ENCODE measurements at regions of chr6 and their contacts with region 1.

Region 1: DNA sequence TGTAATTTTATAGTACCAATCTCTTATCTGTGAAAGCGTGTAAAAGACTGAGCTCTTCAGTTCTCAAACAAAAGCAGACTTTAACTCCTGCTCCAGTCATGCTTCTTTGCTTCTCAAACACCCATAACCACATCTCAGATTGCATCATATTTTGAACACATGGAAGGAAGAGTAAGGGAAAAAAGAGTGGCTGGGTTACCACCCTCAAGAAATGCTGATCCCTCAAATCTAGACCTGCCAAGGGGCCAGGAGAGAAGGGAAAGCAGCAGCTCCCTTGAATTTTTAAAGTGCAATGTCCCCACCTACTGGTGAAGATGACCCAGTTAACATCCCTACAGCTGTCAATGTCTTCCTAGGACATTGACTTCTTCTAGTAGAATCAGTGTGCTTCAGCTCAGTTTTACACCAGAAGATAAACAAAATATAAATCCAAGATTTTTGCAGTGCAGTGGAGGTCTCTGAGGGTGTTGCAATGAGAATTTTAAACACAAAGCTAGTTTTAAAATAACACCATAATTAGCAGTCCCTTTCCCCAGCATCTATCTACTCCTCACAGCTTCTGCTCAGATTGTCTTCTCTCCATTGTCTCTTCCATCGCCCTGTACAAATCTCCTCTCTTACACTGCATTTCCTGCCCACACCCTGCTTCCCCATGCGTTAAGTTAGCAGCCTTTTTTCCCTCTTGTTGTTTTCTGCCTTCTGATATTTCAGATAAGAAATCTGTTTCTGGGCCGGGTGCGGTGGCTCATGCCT is 22.6 kb upstream of the HLA-DQB2 start:
- DNase-seq: peak; percentile 73 to 84 (median 80)
- H3K4me3 ChIP-seq: no peak overlapping the region
- H3K27ac ChIP-seq: no peak overlapping the region
- H3K4me1 ChIP-seq: peaks cover 0 to 4% (median 0%) of the 10 kb centered on the region in 4 experiments
- H3K27me3 ChIP-seq: no peaks in the 10 kb centered on the region

Region 2: GRCh38 chr6:32424589-32425300 is 361.2 kb before region 1 on chr6:
- CTCF ChIA-PET with region 1: interaction called, 12 read pairs
- POLR2A ChIA-PET with region 1: no interaction called
- DNase-seq: no peak
- H3K4me3 ChIP-seq: no peak overlapping the region
- H3K27ac ChIP-seq: no peak overlapping the region
- H3K4me1 ChIP-seq: peaks cover 0 to 1% (median 0%) of the 10 kb centered on the region in 4 experiments
- H3K27me3 ChIP-seq: no peaks in the 10 kb centered on the region

Region 3: DNA sequence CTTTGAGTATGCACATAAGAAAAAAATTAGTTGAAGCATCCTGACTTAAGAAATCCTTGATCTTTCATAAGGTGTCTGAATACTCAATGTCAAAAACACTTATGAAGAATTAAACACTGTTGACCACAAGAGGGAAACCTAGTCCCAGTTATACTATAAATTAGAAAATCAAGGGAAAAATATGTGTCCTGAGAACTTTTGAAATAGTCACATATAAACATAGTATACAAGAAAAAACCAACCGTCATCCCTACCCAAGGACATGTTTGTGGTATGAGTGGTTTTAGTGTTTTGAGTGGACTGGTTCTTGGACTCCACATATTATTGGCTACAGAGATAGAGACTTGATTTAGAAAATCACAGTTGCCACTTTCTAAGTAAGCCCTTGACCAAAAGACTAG is 353.9 kb before region 1 on chr6:
- CTCF ChIA-PET with region 1: interaction called, 32 read pairs
- POLR2A ChIA-PET with region 1: no interaction called
- DNase-seq: peak; percentile 60 to 69 (median 63)
- H3K4me3 ChIP-seq: no peak overlapping the region
- H3K27ac ChIP-seq: no peak overlapping the region
- H3K4me1 ChIP-seq: peaks cover 2 to 8% (median 5%) of the 10 kb centered on the region in 4 experiments
- H3K27me3 ChIP-seq: no peaks in the 10 kb centered on the region

Region 4: GRCh38 chr6:32700391-32701040 is 85.4 kb before region 1 on chr6:
- CTCF ChIA-PET with region 1: interaction called, 21 read pairs
- POLR2A ChIA-PET with region 1: no interaction called
- DNase-seq: peak; percentile 51 to 63 (median 60)
- H3K4me3 ChIP-seq: peak overlapping the region in 3 of 7 experiments; percentile 23 to 53 (median 36)
- H3K27ac ChIP-seq: no peak overlapping the region
- H3K4me1 ChIP-seq: peaks cover 0 to 4% (median 2%) of the 10 kb centered on the region in 4 experiments
- H3K27me3 ChIP-seq: peaks cover 0 to 6% (median 0%) of the 10 kb centered on the region in 5 experiments

Region 5: DNA sequence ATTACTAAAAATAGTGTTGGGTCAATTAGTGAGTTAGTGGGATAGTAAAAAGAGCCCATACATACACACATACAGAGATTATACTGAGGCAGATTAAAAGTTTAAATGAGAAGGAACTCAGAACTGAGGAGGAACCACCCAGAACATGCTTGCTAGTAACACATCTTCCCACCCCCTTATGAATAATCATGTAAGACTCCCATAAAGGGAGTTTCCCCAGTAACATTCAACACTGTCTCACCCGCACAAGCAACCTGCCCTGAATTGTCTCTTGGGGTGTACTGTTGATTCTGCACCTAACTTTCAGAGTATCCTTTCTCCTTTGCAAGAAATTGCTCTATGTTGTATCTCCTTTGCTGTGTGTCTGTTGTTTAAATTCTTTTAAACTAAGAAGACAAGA is 11.5 kb before region 1 on chr6:
- CTCF ChIA-PET with region 1: interaction called, 13 read pairs
- POLR2A ChIA-PET with region 1: no interaction called
- DNase-seq: peak in 2 of 3 donors; percentile 23 to 38
- H3K4me3 ChIP-seq: no peak overlapping the region
- H3K27ac ChIP-seq: no peak overlapping the region
- H3K4me1 ChIP-seq: peaks cover 0 to 18% (median 10%) of the 10 kb centered on the region in 4 experiments
- H3K27me3 ChIP-seq: peaks cover 0 to 6% (median 2%) of the 10 kb centered on the region in 5 experiments